BJ (cell line): ENCODE measurements at regions of chr7 and their contacts with region 1.

Region 1: DNA sequence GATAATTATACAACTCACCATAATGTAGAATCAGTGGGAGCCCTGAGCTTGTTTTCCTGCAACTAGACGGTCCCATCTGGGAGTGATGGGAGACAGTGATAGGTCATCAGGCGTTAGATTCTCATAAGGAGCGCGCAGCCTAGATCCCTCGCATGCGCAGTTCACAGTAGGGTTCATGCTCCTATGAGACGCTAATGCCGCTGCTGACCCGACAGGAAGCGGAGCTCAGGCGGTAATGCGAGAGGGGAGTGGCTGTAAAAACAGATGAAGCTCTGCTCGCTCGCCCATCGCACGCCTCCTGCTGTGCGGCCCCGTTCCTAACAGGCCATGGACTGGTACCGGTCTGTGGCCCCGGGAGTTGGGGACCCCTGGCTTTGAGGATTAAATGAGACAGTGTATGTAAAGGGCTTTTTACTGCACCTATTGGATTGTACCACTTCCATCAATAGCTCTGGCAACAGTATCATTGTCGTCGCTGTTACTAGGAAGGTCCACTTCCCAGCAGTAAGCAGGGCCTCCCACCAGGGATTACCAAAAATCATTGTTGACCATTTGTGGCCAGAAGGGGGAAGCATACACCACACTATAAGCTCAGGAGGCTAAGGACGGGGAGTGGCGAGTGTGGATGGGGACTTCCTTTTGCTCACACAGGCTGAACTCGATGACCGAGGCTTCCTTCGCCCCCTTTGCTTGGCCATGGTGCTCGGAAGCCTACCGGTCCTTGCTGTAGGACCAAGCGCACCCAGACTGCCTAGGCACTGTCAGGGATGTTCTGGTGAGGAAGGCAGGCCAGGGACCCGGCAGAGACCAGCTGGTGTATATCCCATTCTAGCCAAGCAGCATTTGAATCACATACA is 26.4 kb downstream of the AKR1B1 start:
- DNase-seq: peak; percentile 54
- H3K4me3 ChIP-seq: peak overlapping the region; percentile 28
- H3K27me3 ChIP-seq: no peaks in the 10 kb centered on the region
- CTCF ChIP-seq: peak; percentile 53

Region 2: GRCh38 chr7:132895231-132895630 is 1537.3 kb before region 1 on chr7:
- CTCF ChIA-PET with region 1: no interaction called
- POLR2A ChIA-PET with region 1: no interaction called
- DNase-seq: no peak
- H3K4me3 ChIP-seq: no peak overlapping the region
- H3K27me3 ChIP-seq: no peaks in the 10 kb centered on the region
- CTCF ChIP-seq: no peak

Region 3: GRCh38 chr7:134420424-134421125 is 11.9 kb before region 1 on chr7:
- CTCF ChIA-PET with region 1: interaction called, 20 read pairs
- POLR2A ChIA-PET with region 1: no interaction called
- DNase-seq: no peak
- H3K4me3 ChIP-seq: no peak overlapping the region
- H3K27me3 ChIP-seq: no peaks in the 10 kb centered on the region
- CTCF ChIP-seq: peak; percentile 69

Region 4: DNA sequence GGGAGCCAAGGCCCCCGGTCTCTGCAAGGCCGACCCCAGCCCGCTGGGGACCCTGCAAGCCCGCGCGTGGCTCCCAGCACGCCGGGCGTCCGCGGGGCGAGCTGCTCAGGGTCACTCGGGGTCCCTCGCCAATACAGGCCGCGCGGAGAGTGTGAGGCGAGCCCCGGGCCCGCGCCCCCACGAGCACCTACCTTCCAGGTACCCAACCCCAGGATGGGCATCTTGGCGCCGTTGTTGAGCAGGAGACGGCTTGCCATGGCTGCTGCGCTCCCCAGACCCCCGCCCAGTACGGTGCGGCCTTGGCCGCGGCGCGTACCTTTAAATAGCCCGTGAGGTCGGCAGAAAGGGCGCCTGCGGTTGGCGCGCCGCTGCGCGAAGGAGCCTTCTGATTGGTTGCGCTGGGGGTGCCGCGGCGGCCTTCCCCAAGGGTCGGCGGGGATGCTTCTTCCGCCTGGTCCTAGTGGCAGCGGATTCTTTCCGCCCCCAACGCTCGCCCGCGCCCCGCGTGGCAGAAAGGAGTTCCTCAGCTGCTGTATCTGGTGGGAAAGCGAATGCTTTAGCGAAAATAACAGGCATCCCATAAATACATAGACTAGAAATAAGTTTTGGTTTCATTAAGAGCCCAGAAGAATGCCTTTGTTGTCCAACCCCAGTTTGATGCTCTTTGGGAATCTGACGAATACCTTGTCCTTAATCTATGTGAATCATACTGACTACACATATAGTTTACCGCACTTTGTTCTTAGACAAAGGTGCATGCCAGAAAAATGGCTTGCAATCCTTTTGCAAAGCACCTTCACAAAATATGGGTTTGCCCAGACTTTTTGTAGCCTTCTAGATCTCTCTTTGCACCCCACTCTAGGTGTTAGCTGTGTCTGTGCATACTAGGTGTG is 26.5 kb after region 1 on chr7 and contains the start of gene AKR1B1:
- CTCF ChIA-PET with region 1: interaction called, 28 read pairs
- POLR2A ChIA-PET with region 1: no interaction called
- DNase-seq: peak; percentile 59
- H3K4me3 ChIP-seq: peak within 1 kb of the TSS; percentile 82
- H3K27me3 ChIP-seq: no peaks in the 10 kb centered on the region
- CTCF ChIP-seq: peak; percentile 80
- polyA plus RNA-seq, gene AKR1B1: 257 and 331 TPM in 2 replicates

Region 5: GRCh38 chr7:134547397-134548054 is 115.0 kb after region 1 on chr7:
- CTCF ChIA-PET with region 1: interaction called, 38 read pairs
- POLR2A ChIA-PET with region 1: no interaction called
- DNase-seq: no peak
- H3K4me3 ChIP-seq: peak overlapping the region; percentile 35
- H3K27me3 ChIP-seq: peaks cover 8% of the 10 kb centered on the region
- CTCF ChIP-seq: peak; percentile 89

Region 6: GRCh38 chr7:134605973-134606923 is 173.7 kb after region 1 on chr7:
- CTCF ChIA-PET with region 1: interaction called, 61 read pairs
- POLR2A ChIA-PET with region 1: interaction called, 3 read pairs
- DNase-seq: no peak
- H3K4me3 ChIP-seq: no peak overlapping the region
- H3K27me3 ChIP-seq: no peaks in the 10 kb centered on the region
- CTCF ChIP-seq: peak; percentile 91